Endothelial cell of umbilical vein (primary cell): ENCODE measurements at regions of chr3 and their contacts with region 1.

Region 1: DNA sequence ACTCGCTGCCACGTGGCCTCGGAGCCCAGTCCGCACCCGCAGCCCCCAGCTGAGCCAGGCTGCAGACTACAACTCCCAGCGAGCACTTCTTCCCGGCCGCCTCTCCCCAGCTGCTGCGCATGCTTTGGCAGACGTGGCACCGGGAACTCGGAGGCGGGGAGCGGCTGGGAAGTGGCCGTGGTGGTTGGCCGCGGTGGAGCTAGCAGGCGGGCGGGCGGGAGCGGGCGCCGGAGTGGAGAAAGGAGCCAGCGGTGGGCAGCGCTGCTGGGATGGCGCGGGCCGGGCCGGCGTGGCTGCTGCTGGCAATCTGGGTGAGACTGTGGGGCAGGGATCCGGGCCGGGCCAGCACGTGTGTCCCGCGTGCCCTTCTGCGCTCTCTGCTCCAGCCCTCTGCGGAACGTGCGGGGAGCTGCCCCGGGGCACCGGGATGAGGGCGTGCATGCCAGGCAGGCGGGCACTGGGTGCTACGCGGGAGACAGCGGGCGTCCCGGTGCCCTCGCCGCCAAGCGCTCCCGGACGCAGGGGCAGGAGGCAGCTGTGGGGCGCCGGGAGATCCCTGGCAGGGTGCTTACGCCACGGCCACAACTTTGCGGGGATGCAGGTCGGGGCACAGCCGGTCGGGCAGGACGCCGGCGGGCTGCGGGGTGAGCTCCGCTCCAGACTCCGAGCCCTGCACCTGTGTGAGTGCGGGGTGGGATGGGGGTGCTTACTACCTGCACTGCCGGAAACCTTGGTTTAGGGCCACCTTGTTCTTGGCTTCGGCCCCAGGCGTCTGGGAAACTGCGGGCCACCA is at the start of gene PDIA5:
- DNase-seq: peak; percentile 93
- H3K4me3 ChIP-seq: peak within 1 kb of the TSS; percentile 92 to 96 (median 93)
- H3K27ac ChIP-seq: peak within 1 kb of the TSS; percentile 42
- H3K4me1 ChIP-seq: peaks cover 19% of the 10 kb centered on the region
- H3K27me3 ChIP-seq: peaks cover 2 to 3% of the 10 kb centered on the region in 2 experiments
- CTCF ChIP-seq: no peak
- POLR2A ChIP-seq: peak; percentile 80
- total RNA-seq, gene PDIA5: 85.2 and 85.6 TPM in 2 replicates

Region 2: GRCh38 chr3:123036352-123037014 is 30.6 kb before region 1 on chr3:
- CTCF ChIA-PET with region 1: no interaction called
- POLR2A ChIA-PET with region 1: no interaction called
- dilution Hi-C with region 1: no loop called
- intact Hi-C with region 1: no loop called
- DNase-seq: no peak
- H3K4me3 ChIP-seq: no peak overlapping the region
- H3K27ac ChIP-seq: no peak overlapping the region
- H3K4me1 ChIP-seq: no peaks in the 10 kb centered on the region
- H3K27me3 ChIP-seq: peaks cover 40 to 47% of the 10 kb centered on the region in 2 experiments
- CTCF ChIP-seq: no peak
- POLR2A ChIP-seq: no peak

Region 3: DNA sequence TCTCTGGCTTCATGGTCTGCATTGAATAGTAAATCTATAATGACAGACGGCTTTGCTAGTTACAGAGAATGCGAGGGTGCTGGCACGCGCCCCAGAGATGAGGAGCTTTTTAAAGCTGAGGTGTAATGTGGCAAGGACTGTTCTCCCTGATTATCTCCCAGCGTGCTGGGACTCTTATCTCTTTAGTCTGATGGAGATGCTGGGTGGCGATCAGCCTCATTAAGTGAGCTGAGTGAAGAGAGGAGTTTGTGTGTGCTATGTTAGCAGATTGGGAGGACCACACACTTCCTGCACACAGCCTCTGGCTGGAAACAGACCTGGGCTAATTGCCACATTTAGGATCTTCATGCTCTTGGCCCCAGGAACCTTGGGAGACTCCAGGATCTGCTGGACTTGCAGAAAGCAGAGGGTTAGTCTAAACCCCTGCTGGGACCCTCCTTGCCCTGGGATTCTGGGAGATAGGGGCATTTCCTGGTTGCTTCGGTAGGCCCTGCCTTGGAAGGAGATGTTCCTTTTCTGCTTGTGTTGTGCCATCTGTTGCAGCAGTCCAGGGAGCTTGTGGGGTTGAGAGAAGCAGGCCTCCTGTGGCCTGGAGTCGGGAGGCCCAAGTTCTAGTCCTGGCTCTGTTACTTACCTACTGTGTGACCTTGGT is 14.8 kb after region 1 on chr3:
- CTCF ChIA-PET with region 1: interaction called, 20 read pairs
- POLR2A ChIA-PET with region 1: interaction called, 10 read pairs
- dilution Hi-C with region 1: no loop called
- intact Hi-C with region 1: loop called (anchors 2 kb)
- DNase-seq: peak; percentile 38
- H3K4me3 ChIP-seq: no peak overlapping the region
- H3K27ac ChIP-seq: peak overlapping the region; percentile 60
- H3K4me1 ChIP-seq: peaks cover 73% of the 10 kb centered on the region
- H3K27me3 ChIP-seq: no peaks in the 10 kb centered on the region
- CTCF ChIP-seq: no peak
- POLR2A ChIP-seq: no peak

Region 4: GRCh38 chr3:123201566-123202427 is 134.7 kb after region 1 on chr3 and contains the start of gene SEC22A:
- CTCF ChIA-PET with region 1: no interaction called
- POLR2A ChIA-PET with region 1: no interaction called
- dilution Hi-C with region 1: no loop called
- intact Hi-C with region 1: loop called (anchors 5 kb)
- DNase-seq: peak; percentile 95
- H3K4me3 ChIP-seq: peak within 1 kb of the TSS; percentile 67 to 93 (median 80)
- H3K27ac ChIP-seq: peak within 1 kb of the TSS; percentile 52
- H3K4me1 ChIP-seq: peaks cover 11% of the 10 kb centered on the region
- H3K27me3 ChIP-seq: no peaks in the 10 kb centered on the region
- CTCF ChIP-seq: no peak
- POLR2A ChIP-seq: peak; percentile 79
- total RNA-seq, gene SEC22A: 20.1 and 20.9 TPM in 2 replicates

Region 5: DNA sequence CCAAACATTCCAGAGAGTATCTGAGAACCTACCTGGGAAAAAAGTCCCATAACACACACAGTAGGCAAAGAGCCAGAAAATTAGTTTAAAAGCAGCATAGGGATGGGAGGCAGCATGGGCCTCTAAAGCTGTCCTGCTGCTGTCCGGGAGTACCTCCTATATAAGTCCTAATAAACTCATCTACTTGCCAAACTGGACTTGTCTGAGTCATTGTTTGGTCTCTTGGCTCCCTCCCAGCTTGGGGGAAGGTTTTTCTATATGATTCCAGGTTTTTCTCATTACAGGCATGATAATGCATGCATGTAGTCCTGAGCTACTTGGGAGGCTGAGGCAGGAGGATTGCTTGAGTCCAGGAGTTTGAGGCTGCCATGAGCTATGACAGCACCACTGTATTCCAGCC is 535.2 kb after region 1 on chr3:
- CTCF ChIA-PET with region 1: no interaction called
- POLR2A ChIA-PET with region 1: no interaction called
- dilution Hi-C with region 1: no loop called
- intact Hi-C with region 1: no loop called
- DNase-seq: peak; percentile 83
- H3K4me3 ChIP-seq: no peak overlapping the region
- H3K27ac ChIP-seq: no peak overlapping the region
- H3K4me1 ChIP-seq: peaks cover 6% of the 10 kb centered on the region
- H3K27me3 ChIP-seq: no peaks in the 10 kb centered on the region
- CTCF ChIP-seq: no peak
- POLR2A ChIP-seq: no peak